ENCODE measurements at regions of chr1 and their contacts with region 1.

Region 1: DNA sequence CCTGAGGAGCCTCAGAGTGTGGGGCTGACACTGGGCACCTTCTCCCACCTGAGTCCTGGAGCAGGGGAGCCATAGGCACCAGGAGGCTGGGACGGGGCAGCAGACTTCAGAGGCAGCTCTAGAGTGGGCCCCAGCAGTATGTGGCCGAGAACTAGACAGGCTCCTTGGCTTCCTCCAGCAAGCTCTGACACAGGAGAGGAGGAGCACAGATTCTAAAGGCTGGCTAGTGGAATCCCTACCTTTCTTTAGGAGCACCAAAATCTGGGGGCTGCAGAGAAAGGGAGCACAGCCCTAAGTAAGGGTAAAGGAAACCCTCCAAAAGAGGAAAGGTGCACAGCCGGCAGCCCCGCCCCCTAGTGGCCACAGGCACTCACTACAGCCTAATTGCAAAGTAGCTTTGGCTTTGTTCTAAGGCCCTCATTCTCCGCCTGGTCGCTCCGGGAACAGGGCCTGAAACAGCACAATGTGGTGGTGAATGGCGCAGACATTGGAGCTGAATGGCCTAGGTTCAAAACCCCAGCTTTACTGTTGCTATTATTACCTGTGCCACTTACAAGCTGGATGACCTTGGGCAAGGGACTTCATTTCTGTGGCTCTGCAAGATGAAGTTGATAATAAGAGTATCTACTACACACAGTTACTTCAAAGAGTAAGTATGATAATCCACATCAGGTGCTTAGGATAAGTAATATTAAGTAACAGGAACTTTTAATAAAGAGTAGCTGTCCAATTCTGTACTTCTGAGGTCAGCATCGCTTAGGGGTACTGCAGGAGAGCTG is 8.8 kb upstream of the GUCA2A start:
- DNase-seq: peak; percentile 74
- H3K4me3 ChIP-seq: peak overlapping the region in 1 of 2 experiments; percentile 10; a peak in 1 of 4 replicates
- H3K27ac ChIP-seq: peak overlapping the region in 1 of 2 experiments; percentile 19; a peak in 2 of 4 replicates
- H3K4me1 ChIP-seq: peaks cover 14 to 46% of the 10 kb centered on the region in 2 experiments; a peak in 3 of 4 replicates
- H3K27me3 ChIP-seq: no peaks in the 10 kb centered on the region
- CTCF ChIP-seq: peak; percentile 96
- EP300 ChIP-seq: no peak
- RAD21 ChIP-seq: peak; percentile 64

Region 2: DNA sequence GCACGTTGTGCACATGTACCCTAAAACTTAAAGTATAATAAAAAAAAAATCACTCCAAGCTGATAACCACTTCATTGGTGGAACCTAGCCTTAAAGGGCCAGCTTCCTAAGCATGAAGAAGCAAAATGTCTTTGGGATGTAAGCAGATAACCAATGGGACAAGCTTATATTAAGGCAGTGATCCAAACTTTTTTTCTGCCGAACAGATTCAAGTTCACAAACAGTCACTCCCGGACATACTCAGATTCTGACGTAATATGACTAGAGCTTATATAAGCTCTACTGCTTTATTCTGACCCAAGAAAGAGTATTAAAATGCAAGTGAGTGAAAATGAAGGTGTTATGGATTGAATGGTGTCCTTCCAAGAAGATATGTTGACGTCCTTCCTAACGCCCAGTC is 209.7 kb before region 1 on chr1:
- CTCF ChIA-PET with region 1: no interaction called
- POLR2A ChIA-PET with region 1: no interaction called
- DNase-seq: no peak
- H3K4me3 ChIP-seq: no peak overlapping the region
- H3K27ac ChIP-seq: no peak overlapping the region
- H3K4me1 ChIP-seq: no peaks in the 10 kb centered on the region
- H3K27me3 ChIP-seq: no peaks in the 10 kb centered on the region
- CTCF ChIP-seq: no peak
- EP300 ChIP-seq: no peak
- RAD21 ChIP-seq: no peak

Region 3: DNA sequence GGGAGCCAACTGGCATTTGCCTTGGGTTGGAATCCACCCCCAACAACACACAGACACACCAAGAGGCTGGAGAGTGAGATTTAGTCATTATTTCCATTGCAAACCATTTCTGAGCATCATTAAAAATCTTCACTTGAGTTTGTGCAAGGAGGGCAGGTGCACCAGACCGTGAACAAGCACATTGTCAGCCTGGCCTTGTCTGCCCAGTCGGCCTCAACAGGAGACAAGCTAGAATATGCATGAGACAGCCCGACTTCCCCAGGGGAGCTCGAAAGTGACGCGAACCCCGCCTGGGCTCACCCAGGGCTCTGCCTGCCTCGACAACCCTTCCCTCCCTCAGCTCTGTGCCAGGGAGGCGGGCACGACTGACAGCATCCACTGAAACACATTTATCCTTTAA is 35.6 kb before region 1 on chr1:
- CTCF ChIA-PET with region 1: interaction called, 18 read pairs
- POLR2A ChIA-PET with region 1: no interaction called
- DNase-seq: no peak
- H3K4me3 ChIP-seq: no peak overlapping the region
- H3K27ac ChIP-seq: no peak overlapping the region
- H3K4me1 ChIP-seq: no peaks in the 10 kb centered on the region
- H3K27me3 ChIP-seq: peaks cover 12% of the 10 kb centered on the region; the same call in 1 of the 2 replicates
- CTCF ChIP-seq: no peak
- EP300 ChIP-seq: no peak
- RAD21 ChIP-seq: no peak

Region 4: GRCh38 chr1:42157667-42158066 is 15.7 kb before region 1 on chr1:
- CTCF ChIA-PET with region 1: interaction called, 27 read pairs
- POLR2A ChIA-PET with region 1: no interaction called
- DNase-seq: no peak
- H3K4me3 ChIP-seq: no peak overlapping the region
- H3K27ac ChIP-seq: no peak overlapping the region
- H3K4me1 ChIP-seq: no peaks in the 10 kb centered on the region
- H3K27me3 ChIP-seq: no peaks in the 10 kb centered on the region
- CTCF ChIP-seq: no peak; the same call in 1 of the 2 replicates
- EP300 ChIP-seq: no peak
- RAD21 ChIP-seq: no peak

Region 5: DNA sequence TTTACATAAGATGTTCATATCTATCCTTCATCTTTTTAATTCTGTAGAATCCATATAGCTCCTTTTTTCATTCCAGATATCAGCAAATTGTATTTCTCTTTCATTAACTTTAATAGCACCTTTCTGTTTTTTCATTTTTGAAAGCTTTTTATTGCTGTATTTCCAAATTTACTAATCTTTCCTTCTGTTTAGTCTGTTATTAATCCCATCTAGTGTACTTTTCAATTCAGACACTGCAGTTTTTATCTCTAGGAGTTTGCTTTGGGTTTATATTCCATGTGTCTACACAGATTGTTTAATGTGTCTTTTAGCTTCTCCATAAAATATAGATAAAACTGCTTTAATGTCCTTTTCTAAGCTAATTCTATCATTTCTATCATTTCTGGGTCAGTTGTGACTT is 28.6 kb after region 1 on chr1:
- CTCF ChIA-PET with region 1: interaction called, 10 read pairs
- POLR2A ChIA-PET with region 1: no interaction called
- DNase-seq: no peak
- H3K4me3 ChIP-seq: no peak overlapping the region
- H3K27ac ChIP-seq: no peak overlapping the region
- H3K4me1 ChIP-seq: no peaks in the 10 kb centered on the region
- H3K27me3 ChIP-seq: no peaks in the 10 kb centered on the region
- CTCF ChIP-seq: no peak
- EP300 ChIP-seq: no peak
- RAD21 ChIP-seq: no peak

Region 6: DNA sequence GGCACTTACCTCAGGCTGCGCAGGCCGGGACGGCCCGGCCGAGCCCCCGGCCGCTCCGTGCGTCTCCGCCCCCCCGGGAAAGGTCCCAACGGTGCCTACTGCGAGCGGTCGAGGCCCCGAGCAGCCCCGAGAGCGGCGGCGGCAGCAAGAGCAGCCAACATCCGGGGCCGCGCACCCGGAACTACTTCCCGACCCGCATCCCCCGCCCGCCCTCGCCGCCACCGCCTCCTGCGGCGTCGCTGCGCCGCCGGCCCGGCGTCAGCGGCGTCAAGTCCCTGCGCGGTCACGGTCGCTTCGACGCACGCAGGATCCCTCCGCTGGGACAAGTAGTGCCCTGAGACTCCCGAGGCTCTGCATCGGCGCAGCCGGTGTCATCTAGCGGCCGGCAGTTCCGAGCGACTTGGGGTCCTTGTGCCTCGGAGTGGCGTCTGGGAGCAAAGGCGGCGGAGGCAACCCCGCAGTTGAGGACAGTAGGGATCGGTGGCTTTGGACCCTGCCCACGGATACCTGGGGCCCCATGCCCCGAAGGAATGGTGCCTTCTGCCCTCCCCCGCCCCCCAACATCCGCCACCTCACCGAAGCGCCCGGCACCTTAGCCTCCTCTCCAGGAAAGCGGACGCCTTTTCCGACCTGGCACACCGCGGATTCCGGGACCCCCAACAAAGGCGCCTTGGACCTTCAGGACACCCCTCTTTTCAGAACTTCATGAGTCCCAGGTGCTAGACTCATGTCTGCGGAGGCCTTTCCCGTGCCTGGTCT is 161.9 kb after region 1 on chr1 and contains the start of gene FOXJ3:
- CTCF ChIA-PET with region 1: interaction called, 15 read pairs
- POLR2A ChIA-PET with region 1: no interaction called
- DNase-seq: peak; percentile 98
- H3K4me3 ChIP-seq: peak within 1 kb of the TSS; percentile 81 to 97
- H3K27ac ChIP-seq: peak within 1 kb of the TSS; percentile 75 to 92
- H3K4me1 ChIP-seq: peaks cover 6 to 13% of the 10 kb centered on the region in 2 experiments; a peak in 3 of 4 replicates
- H3K27me3 ChIP-seq: no peaks in the 10 kb centered on the region
- CTCF ChIP-seq: no peak
- EP300 ChIP-seq: peak; percentile 10 to 60; a peak in 1 of 4 replicates
- RAD21 ChIP-seq: peak; percentile 27
- polyA plus RNA-seq, gene FOXJ3: 16.0 and 24.2 TPM in 2 replicates

Measured in SK-N-SH (cell line).